CD8-positive, alpha-beta T cell (primary cell): ENCODE measurements at regions of chr9 and their contacts with region 1.

Region 1: GRCh38 chr9:4464911-4465513 is 25.3 kb upstream of the SLC1A1 start:
- DNase-seq: no peak
- ATAC-seq: no peak
- H3K4me3 ChIP-seq: no peak overlapping the region
- H3K4me3 Mint-ChIP-seq: no peak overlapping the region
- H3K27ac ChIP-seq: no peak overlapping the region
- H3K27ac Mint-ChIP-seq: no peak overlapping the region
- H3K4me1 ChIP-seq: no peaks in the 10 kb centered on the region
- H3K4me1 Mint-ChIP-seq: no peaks in the 10 kb centered on the region
- H3K27me3 ChIP-seq: no peaks in the 10 kb centered on the region
- H3K27me3 Mint-ChIP-seq: no peaks in the 10 kb centered on the region
- CTCF ChIP-seq: no peak

Region 2: DNA sequence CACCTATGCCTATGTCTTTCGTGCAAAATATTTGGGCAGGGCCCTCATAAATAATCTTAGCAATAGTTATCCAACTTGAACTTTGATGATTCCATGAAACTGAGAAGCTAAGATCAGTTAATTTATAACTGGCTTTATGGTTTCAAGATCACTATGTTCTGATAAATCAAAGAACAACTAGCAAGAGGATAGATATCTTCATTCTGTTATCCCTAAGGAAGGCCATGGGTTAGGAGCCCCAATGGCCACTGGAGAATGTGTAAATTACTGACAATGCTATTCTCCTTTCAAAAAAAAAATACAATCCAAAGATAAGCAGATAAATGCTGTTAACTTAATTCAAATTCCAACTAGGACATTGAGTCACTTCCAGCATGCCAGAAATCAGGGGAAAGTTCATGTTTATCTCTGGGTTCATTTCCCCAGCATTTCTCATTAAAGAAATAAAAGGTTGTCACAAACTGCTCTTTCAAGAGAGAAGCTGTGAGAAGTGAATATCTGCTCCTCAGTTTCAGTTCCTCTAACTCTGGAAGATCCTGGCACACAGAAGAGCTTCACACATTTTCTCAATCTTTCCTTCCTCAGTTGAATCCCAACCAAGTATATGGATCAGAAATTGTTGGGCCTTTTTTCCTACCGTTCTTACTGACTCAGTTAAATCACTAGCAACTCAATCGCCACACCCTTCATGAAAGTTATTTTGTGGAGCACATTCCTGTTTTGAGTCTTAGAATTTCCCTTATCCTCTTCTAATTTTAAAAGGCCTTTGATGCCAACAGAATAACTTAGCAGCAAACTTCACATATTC is 34.4 kb before region 1 on chr9:
- CTCF ChIA-PET with region 1: no interaction called
- POLR2A ChIA-PET with region 1: no interaction called
- intact Hi-C with region 1: loop called in 1 of 2 experiments (anchors 2 kb)
- DNase-seq: no peak
- ATAC-seq: no peak
- H3K4me3 ChIP-seq: no peak overlapping the region
- H3K4me3 Mint-ChIP-seq: no peak overlapping the region
- H3K27ac ChIP-seq: no peak overlapping the region
- H3K27ac Mint-ChIP-seq: no peak overlapping the region
- H3K4me1 ChIP-seq: no peaks in the 10 kb centered on the region
- H3K4me1 Mint-ChIP-seq: no peaks in the 10 kb centered on the region
- H3K27me3 ChIP-seq: no peaks in the 10 kb centered on the region
- H3K27me3 Mint-ChIP-seq: no peaks in the 10 kb centered on the region
- CTCF ChIP-seq: no peak

Region 3: DNA sequence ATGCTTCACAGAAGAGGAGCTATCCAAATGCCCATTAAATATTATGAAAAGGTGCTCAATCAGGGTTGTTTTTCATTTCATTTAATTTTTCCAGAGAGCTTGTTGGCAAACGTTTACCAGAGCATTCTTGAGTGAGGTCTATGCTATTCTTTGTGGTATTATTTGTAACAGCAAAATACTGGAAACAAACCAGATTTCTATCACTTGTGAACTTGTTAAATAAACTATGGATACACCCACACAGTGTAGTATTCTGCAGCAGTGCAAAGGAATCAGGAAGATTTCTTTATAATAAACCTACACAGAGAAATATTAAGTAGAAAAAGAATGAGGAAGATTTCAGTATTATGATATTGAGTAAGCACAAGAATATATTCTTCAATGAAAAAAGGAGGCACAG is 10.3 kb after region 1 on chr9:
- CTCF ChIA-PET with region 1: no interaction called
- POLR2A ChIA-PET with region 1: no interaction called
- intact Hi-C with region 1: no loop called
- DNase-seq: no peak
- ATAC-seq: no peak
- H3K4me3 ChIP-seq: no peak overlapping the region
- H3K4me3 Mint-ChIP-seq: no peak overlapping the region
- H3K27ac ChIP-seq: no peak overlapping the region
- H3K27ac Mint-ChIP-seq: no peak overlapping the region
- H3K4me1 ChIP-seq: no peaks in the 10 kb centered on the region
- H3K4me1 Mint-ChIP-seq: no peaks in the 10 kb centered on the region
- H3K27me3 ChIP-seq: no peaks in the 10 kb centered on the region
- H3K27me3 Mint-ChIP-seq: no peaks in the 10 kb centered on the region
- CTCF ChIP-seq: no peak